Caco-2 (cell line): ENCODE measurements at regions of chr14 and their contacts with region 1.

Region 1: DNA sequence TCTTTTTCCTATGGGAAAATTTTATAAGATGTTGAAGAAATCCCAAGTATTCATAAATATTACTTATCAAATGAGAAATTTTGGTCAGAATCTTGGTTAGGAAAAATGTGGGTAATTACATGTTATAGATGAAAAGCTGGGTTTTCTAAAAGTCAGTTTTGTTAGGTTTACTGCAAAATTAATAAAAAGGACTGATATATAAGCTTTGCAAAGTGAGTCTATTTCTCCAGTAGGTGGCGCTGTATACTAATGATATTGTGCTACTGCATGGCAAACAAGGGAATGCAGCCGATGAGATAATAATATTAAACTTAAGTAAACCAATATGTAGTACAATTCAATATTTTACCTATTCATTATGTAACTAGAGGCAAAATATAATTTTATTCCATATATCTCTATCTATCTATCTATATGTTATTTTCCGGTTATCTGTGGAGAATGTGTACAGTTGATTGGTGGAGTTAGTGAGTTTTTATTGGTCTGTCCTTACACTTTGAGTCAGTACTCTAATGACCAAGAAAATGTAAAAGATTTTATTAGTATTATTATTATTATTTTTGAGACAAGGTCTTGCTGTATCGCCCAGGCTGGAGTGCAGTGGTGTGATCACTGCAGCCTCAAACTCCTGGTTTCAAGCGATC is 32.9 kb downstream of the MIPOL1 start:
- DNase-seq: peak in 1 of 2 experiments; percentile 54
- H3K4me3 ChIP-seq: no peak overlapping the region
- H3K4me3 Mint-ChIP-seq: no peak overlapping the region
- H3K27ac Mint-ChIP-seq: no peak overlapping the region
- H3K4me1 ChIP-seq: 0 out of 2 replicates have a peak, but pooled peaks cover 7% of the 10 kb centered on the region
- H3K4me1 Mint-ChIP-seq: no peaks in the 10 kb centered on the region
- H3K27me3 ChIP-seq: no peaks in the 10 kb centered on the region
- H3K27me3 Mint-ChIP-seq: no peaks in the 10 kb centered on the region
- CTCF ChIP-seq: peak; percentile 57 to 84

Region 2: DNA sequence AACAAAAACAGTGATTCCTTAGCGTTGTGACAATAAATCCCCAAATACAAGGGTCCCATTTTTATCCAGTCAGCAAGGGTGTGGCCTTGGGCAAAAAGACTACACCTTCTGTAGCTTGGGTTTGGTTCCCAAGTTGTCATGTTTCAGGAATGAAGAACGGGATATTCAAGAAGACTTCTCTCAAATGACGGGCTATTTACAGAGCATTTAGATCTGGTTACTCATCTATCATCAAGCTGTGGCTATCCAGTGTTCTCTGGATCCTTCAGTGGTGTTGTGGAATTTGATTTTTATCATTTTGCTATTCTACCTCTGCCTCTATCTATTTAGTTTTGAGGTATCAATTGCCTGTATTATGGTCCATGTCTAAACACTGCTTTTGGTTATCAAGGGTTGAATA is 278.0 kb before region 1 on chr14:
- CTCF ChIA-PET with region 1: no interaction called
- POLR2A ChIA-PET with region 1: no interaction called
- intact Hi-C with region 1: loop called (anchors 10 kb)
- DNase-seq: peak in 1 of 2 experiments; percentile 34
- H3K4me3 ChIP-seq: no peak overlapping the region
- H3K4me3 Mint-ChIP-seq: no peak overlapping the region
- H3K27ac Mint-ChIP-seq: no peak overlapping the region
- H3K4me1 ChIP-seq: peaks cover 43% of the 10 kb centered on the region
- H3K4me1 Mint-ChIP-seq: peaks cover 19% of the 10 kb centered on the region
- H3K27me3 ChIP-seq: no peaks in the 10 kb centered on the region
- H3K27me3 Mint-ChIP-seq: no peaks in the 10 kb centered on the region
- CTCF ChIP-seq: no peak

Region 3: DNA sequence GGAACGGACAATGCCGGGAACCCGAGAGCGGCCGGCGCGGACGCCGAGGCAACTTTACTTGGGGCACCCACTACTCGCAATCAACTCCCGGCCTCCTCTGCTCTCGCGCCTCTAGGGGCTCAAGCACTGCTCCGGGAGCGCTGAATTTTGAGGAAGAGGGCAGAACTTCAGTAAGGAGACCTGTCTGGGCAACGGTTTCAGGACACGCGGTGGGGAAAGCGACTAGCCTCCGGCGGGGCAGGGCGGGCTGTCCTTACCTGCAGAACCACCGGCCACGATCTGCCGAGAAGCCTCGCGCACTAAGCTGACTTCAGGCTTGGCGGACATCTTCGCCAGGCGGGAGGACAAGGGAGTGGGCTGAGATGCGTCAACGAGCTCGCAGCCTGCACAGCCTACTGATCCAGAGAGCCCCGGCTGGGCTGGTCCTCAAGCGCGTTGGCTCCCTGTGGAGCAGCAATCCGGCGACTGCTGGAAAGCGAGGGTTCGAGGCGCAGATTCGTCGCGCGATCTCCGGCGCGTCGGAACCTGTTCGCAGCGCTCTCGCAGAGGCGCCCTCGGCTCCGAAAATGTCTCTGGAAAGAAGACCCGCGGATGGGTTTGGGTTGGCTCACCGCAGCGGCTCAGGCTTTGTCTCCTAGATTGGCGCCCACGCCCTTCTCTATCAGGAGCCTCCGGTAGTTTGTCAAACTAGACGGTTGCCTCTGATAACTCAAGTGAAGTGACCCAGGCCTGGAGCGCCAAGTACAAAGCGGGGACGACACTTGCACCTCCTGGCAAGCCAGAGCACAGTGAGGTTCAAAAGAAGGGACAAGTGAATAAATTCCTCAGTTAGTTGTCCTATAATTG is 58.4 kb before region 1 on chr14 and contains the start of gene SLC25A21:
- CTCF ChIA-PET with region 1: interaction called, 3 read pairs
- POLR2A ChIA-PET with region 1: no interaction called
- intact Hi-C with region 1: loop called (anchors 2 kb)
- DNase-seq: peak; percentile 83 to 85
- H3K4me3 ChIP-seq: peak within 1 kb of the TSS; percentile 86
- H3K4me3 Mint-ChIP-seq: peak within 1 kb of the TSS; percentile 90
- H3K27ac Mint-ChIP-seq: peak within 1 kb of the TSS; percentile 97
- H3K4me1 ChIP-seq: peaks cover 18% of the 10 kb centered on the region
- H3K4me1 Mint-ChIP-seq: peaks cover 7% of the 10 kb centered on the region
- H3K27me3 ChIP-seq: no peaks in the 10 kb centered on the region
- H3K27me3 Mint-ChIP-seq: no peaks in the 10 kb centered on the region
- CTCF ChIP-seq: peak in 1 of 2 experiments; percentile 34
- total RNA-seq, gene SLC25A21: 3.2 and 3.6 TPM in 2 replicates

Region 4: DNA sequence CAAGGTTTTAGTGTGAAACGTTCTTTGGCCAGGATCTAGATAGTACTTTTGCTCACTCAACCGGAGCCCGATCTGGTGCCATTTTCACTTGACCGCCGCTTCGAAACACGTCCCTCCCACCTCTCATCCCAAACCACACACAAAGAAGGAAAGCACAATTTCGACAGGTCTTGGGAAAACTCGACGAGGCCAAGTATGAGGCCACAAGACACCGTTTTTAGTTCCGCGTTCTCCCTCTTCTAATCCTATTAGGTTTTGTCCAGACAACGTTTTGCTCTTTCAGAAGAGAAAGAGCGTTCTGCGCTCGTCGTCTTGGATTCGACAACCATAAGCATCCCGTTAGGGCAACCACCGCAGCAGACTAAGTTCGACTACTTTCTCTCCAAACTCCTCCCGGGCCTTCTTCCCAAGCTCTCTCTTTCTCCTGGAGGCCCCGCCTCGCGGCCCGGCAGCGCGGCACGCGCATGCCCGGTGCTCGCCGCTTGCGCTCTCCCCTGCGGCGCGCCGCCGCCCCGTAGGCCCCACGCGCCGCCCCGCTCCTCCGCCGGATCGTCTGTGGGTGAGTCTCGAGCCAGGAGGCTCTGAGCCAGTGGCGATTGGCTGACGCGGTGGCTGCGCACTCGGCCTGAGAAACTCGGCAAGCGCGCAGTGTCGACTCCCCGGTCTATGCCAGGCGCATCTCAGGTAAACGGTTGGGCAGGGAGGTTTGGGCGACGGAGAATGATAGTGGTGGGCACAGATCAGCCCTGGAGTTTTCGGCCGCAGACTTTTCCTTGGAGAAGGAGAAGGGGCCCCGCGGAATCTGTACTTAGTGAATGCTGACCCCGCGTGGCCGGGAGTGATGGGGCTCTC is 33.0 kb before region 1 on chr14 and contains the start of gene MIPOL1:
- CTCF ChIA-PET with region 1: no interaction called
- POLR2A ChIA-PET with region 1: no interaction called
- intact Hi-C with region 1: loop called (anchors 5 kb)
- DNase-seq: peak; percentile 83 to 86
- H3K4me3 ChIP-seq: peak within 1 kb of the TSS; percentile 73
- H3K4me3 Mint-ChIP-seq: peak within 1 kb of the TSS; percentile 98
- H3K27ac Mint-ChIP-seq: peak within 1 kb of the TSS; percentile 98
- H3K4me1 ChIP-seq: peaks cover 13% of the 10 kb centered on the region; the same call in 1 of the 2 replicates
- H3K4me1 Mint-ChIP-seq: peaks cover 18% of the 10 kb centered on the region
- H3K27me3 ChIP-seq: no peaks in the 10 kb centered on the region
- H3K27me3 Mint-ChIP-seq: no peaks in the 10 kb centered on the region
- CTCF ChIP-seq: peak in 1 of 2 experiments; percentile 52
- total RNA-seq, gene MIPOL1: 18.7 and 20.9 TPM in 2 replicates

Region 5: GRCh38 chr14:37246427-37246914 is 15.8 kb after region 1 on chr14:
- CTCF ChIA-PET with region 1: no interaction called
- POLR2A ChIA-PET with region 1: no interaction called
- intact Hi-C with region 1: no loop called
- DNase-seq: peak in 1 of 2 experiments; percentile 35
- H3K4me3 ChIP-seq: no peak overlapping the region
- H3K4me3 Mint-ChIP-seq: no peak overlapping the region
- H3K27ac Mint-ChIP-seq: no peak overlapping the region
- H3K4me1 ChIP-seq: peaks cover 36% of the 10 kb centered on the region
- H3K4me1 Mint-ChIP-seq: peaks cover 5% of the 10 kb centered on the region
- H3K27me3 ChIP-seq: no peaks in the 10 kb centered on the region
- H3K27me3 Mint-ChIP-seq: no peaks in the 10 kb centered on the region
- CTCF ChIP-seq: peak; percentile 68 to 87

Region 6: GRCh38 chr14:37262649-37263048 is 32.0 kb after region 1 on chr14:
- CTCF ChIA-PET with region 1: no interaction called
- POLR2A ChIA-PET with region 1: no interaction called
- intact Hi-C with region 1: no loop called
- DNase-seq: no peak
- H3K4me3 ChIP-seq: no peak overlapping the region
- H3K4me3 Mint-ChIP-seq: no peak overlapping the region
- H3K27ac Mint-ChIP-seq: no peak overlapping the region
- H3K4me1 ChIP-seq: no peaks in the 10 kb centered on the region
- H3K4me1 Mint-ChIP-seq: peaks cover 9% of the 10 kb centered on the region
- H3K27me3 ChIP-seq: no peaks in the 10 kb centered on the region
- H3K27me3 Mint-ChIP-seq: no peaks in the 10 kb centered on the region
- CTCF ChIP-seq: no peak

Region 7: GRCh38 chr14:37709419-37710195 is 478.9 kb after region 1 on chr14:
- CTCF ChIA-PET with region 1: interaction called, 5 read pairs
- POLR2A ChIA-PET with region 1: no interaction called
- intact Hi-C with region 1: loop called (anchors 5 kb)
- DNase-seq: no peak
- H3K4me3 ChIP-seq: no peak overlapping the region
- H3K4me3 Mint-ChIP-seq: no peak overlapping the region
- H3K27ac Mint-ChIP-seq: no peak overlapping the region
- H3K4me1 ChIP-seq: 0 out of 2 replicates have a peak, but pooled peaks cover 4% of the 10 kb centered on the region
- H3K4me1 Mint-ChIP-seq: no peaks in the 10 kb centered on the region
- H3K27me3 ChIP-seq: no peaks in the 10 kb centered on the region
- H3K27me3 Mint-ChIP-seq: no peaks in the 10 kb centered on the region
- CTCF ChIP-seq: peak; percentile 38